Stomach (tissue), 19 donors: ENCODE measurements at regions of chr6 and their contacts with region 1.

Region 1: GRCh38 chr6:54817236-54817635 is 29.3 kb upstream of the FAM83B start:
- DNase-seq: no peak
- H3K4me3 ChIP-seq: no peak overlapping the region
- H3K27ac ChIP-seq: no peak overlapping the region
- H3K4me1 ChIP-seq: no peaks in the 10 kb centered on the region
- H3K27me3 ChIP-seq: no peaks in the 10 kb centered on the region
- CTCF ChIP-seq: no peak
- EP300 ChIP-seq: no peak
- POLR2A ChIP-seq: no peak

Region 2: GRCh38 chr6:54579011-54579410 is 238.2 kb before region 1 on chr6:
- intact Hi-C with region 1: no loop called
- DNase-seq: no peak
- H3K4me3 ChIP-seq: no peak overlapping the region
- H3K27ac ChIP-seq: no peak overlapping the region
- H3K4me1 ChIP-seq: no peaks in the 10 kb centered on the region
- H3K27me3 ChIP-seq: no peaks in the 10 kb centered on the region
- CTCF ChIP-seq: no peak
- EP300 ChIP-seq: no peak
- POLR2A ChIP-seq: no peak

Region 3: DNA sequence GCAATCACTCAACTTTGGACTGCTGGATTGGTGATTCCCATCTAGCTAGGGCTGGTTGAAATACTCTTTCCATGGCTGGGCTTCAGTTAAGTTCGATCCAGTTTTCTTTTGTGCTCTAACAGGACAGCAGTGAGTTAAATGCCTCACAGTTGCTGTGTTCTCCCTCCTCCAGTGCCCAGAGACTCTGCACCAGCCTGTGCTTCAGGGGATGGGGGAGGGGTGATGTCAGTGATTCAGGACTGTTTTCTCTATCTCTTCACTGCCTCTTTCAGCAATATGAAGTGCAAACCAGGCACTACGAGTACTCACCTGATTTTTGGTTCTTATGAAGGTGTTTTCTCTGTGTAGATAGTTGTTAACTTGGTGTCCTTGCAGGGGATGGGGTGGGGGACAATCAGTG is 58.9 kb before region 1 on chr6:
- intact Hi-C with region 1: no loop called
- DNase-seq: no peak
- H3K4me3 ChIP-seq: no peak overlapping the region
- H3K27ac ChIP-seq: no peak overlapping the region
- H3K4me1 ChIP-seq: no peaks in the 10 kb centered on the region
- H3K27me3 ChIP-seq: no peaks in the 10 kb centered on the region
- CTCF ChIP-seq: no peak
- EP300 ChIP-seq: no peak
- POLR2A ChIP-seq: no peak

Region 4: DNA sequence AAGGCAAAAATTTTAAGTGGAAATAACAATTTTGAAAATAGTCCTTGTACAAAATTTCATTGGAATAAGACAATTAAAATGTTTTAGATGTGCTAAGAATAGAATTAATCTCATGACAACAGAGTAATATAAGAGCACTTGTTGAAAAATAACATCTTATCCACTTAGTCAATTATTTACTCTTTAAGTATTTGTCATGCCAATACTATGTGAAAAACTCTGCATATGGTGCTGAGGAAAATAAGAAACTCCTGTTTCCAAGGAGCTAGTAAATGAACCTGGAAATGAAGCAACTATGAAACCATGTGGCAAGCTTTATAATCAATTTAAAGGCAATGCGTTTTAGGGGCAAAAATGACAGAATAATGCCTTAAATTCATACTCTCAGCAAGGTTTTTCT is 314.4 kb after region 1 on chr6:
- intact Hi-C with region 1: loop called (anchors 5 kb)
- DNase-seq: no peak
- H3K4me3 ChIP-seq: no peak overlapping the region
- H3K27ac ChIP-seq: no peak overlapping the region
- H3K4me1 ChIP-seq: no peaks in the 10 kb centered on the region
- H3K27me3 ChIP-seq: no peaks in the 10 kb centered on the region
- CTCF ChIP-seq: no peak
- EP300 ChIP-seq: no peak
- POLR2A ChIP-seq: no peak